AG04449 (cell line): ENCODE measurements at regions of chr4 and their contacts with region 1.

Region 1: GRCh38 chr4:74376888-74377483 is 12.0 kb downstream of the EREG start:
- DNase-seq: no peak
- H3K4me3 ChIP-seq: no peak overlapping the region
- CTCF ChIP-seq: peak; percentile 38

Region 2: GRCh38 chr4:74320559-74321118 is 56.3 kb before region 1 on chr4:
- CTCF ChIA-PET with region 1: interaction called, 18 read pairs
- POLR2A ChIA-PET with region 1: no interaction called
- DNase-seq: no peak
- H3K4me3 ChIP-seq: no peak overlapping the region; the same call in 1 of the 2 replicates
- CTCF ChIP-seq: peak; percentile 19

Region 3: DNA sequence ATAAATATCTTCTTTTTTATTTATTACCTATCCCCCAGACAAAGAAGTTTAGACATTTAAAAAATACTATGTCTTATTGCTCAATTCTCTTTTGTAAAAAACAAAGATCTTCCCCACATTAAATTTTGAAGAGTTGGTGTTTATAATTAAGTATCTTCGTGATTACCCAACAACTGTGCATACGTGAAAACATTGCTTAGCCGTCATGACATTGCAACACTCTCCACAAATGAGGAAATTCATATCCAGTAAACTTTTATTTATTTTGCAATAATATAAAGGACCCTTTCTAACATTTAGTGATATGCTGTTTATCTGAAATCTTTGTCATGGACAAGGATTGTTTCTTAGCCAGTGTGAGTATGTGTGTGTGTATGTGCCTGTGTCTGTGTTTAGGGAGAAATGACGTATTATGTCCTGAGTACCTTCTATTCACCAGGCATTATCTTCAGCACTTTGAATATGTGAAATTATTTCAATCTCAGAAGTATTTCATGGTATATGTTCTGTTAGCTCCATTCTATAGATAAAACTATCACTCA is 38.1 kb before region 1 on chr4:
- CTCF ChIA-PET with region 1: no interaction called
- POLR2A ChIA-PET with region 1: no interaction called
- DNase-seq: no peak
- H3K4me3 ChIP-seq: no peak overlapping the region
- CTCF ChIP-seq: no peak

Region 4: GRCh38 chr4:74364652-74365491 is 12.1 kb before region 1 on chr4 and contains the start of gene EREG:
- CTCF ChIA-PET with region 1: interaction called, 17 read pairs
- POLR2A ChIA-PET with region 1: no interaction called
- DNase-seq: peak; percentile 7
- H3K4me3 ChIP-seq: peak within 1 kb of the TSS; percentile 55
- CTCF ChIP-seq: no peak

Region 5: DNA sequence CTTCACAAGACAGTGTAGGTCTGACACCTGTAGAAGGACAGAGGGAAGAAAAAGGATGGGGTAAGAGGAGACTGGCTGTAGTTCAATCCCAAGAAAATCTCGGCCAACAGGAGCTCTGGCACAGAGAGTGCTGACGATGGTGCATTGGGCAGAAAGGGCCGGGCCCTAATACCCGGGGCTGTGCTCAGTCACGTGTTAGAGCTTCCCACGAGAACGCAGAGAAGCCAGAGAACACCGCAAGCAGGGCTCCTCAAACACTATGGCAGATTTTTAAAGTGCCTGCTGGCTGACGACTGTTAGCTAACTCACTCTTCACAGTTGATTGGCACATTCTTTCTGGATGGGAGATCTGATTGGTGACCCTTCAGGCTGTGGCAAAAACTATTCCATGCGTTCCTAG is 23.4 kb after region 1 on chr4:
- CTCF ChIA-PET with region 1: interaction called, 10 read pairs
- POLR2A ChIA-PET with region 1: no interaction called
- DNase-seq: no peak
- H3K4me3 ChIP-seq: no peak overlapping the region
- CTCF ChIP-seq: no peak

Region 6: DNA sequence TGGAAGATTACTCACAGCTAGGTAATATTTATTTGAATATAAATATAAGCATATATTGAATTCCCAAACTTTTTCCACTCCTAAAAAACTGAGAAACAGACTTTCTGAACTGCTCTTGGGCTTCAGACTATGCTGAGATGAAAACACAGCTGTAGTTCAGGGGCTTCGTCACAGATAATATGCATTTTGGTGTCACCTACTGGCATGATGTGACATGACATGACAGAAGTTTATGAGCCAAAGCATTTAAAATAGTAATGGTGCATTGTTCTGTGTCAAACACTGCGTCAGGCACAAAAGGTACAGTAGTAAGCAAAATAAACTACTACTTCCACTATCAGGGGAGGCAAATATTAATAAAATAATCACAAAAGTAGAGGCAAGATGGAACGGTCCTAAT is 246.1 kb after region 1 on chr4:
- CTCF ChIA-PET with region 1: interaction called, 32 read pairs
- POLR2A ChIA-PET with region 1: no interaction called
- DNase-seq: no peak
- H3K4me3 ChIP-seq: no peak overlapping the region
- CTCF ChIP-seq: no peak

Region 7: DNA sequence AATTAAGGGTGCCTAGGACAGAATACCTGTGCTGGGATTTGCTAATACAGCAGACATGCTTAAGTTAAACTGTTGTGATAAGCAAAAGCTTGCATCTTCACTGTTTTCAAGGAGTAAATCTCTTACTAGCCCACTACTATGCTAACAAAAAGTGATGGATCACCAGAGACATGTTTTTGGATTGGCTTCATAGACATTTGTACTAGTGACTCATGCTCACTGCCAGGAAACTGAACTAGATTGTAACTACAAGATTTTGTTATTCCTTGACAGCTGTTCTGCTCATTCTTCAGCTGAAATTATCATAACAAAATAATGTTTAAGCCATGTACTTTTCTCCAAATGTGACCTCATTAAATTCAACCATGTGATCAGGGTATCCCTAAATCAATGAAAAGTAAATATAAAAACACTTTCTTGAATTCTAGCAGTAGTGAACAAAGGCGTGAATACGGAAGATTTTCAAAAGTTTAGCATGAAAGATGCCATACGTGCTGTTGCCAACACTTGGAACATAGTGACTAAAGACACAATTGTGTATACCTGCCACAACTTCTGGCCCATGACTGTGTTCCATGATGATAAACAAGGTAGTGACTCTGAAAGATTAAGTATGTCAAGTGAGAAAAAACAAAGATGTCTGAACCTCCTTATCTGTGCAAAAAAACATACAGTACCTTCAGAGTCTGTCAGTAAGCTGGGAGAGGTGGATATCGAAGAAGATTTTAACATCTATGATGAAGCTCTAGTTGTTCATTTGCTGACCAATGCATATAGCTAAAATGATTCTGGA is 263.3 kb after region 1 on chr4:
- CTCF ChIA-PET with region 1: no interaction called
- POLR2A ChIA-PET with region 1: no interaction called
- DNase-seq: no peak
- H3K4me3 ChIP-seq: no peak overlapping the region
- CTCF ChIP-seq: no peak

Region 8: GRCh38 chr4:74665377-74665776 is 288.4 kb after region 1 on chr4:
- CTCF ChIA-PET with region 1: interaction called, 142 read pairs
- POLR2A ChIA-PET with region 1: no interaction called
- DNase-seq: no peak
- H3K4me3 ChIP-seq: no peak overlapping the region
- CTCF ChIP-seq: no peak

Region 9: GRCh38 chr4:74715706-74716435 is 338.9 kb after region 1 on chr4:
- CTCF ChIA-PET with region 1: no interaction called
- POLR2A ChIA-PET with region 1: no interaction called
- DNase-seq: no peak
- H3K4me3 ChIP-seq: no peak overlapping the region
- CTCF ChIP-seq: no peak

Region 10: DNA sequence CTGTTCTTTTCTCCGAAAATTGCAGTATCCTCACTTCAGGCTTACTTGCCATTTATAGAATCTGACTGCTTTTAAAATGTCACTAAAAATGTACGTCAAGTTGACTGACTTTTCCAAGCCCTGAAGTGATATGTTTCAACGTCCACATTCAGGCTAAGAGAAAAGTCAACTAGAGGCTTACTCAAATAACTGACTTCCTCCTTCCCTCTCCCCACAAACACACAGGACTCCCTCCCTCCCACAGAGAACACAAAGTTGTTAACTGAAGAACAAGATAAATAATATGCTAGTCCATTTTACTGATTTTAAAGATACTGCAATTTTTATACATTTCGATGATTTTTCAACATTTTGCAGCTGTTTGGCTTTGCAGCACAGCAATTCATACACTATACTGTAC is 1267.1 kb after region 1 on chr4:
- CTCF ChIA-PET with region 1: no interaction called
- POLR2A ChIA-PET with region 1: no interaction called
- DNase-seq: no peak
- H3K4me3 ChIP-seq: no peak overlapping the region
- CTCF ChIP-seq: no peak